ENCODE measurements at regions of chr2 and their contacts with region 1.

Region 1: DNA sequence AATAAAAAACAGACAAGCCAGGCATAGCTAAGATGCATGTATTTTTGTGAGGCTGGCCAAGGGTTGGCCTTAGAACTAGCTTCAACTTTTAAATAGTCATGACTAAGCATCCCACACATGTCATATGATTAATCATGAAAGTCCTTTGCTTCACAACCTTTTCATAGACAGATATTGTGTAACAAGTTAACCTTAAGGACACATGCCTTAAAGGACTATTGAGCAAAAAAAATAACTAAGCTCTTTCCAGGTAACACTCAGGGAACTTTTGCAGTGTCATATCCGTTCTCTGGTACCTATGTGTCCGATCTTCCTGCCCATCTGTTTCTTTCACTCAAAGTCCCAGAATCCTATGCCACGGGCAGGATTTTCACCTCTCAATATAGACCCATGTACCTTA is 498.4 kb downstream of the STK39 start:
- DNase-seq: peak; percentile 76 to 78
- ATAC-seq: peak; percentile 85 to 89
- H3K4me3 ChIP-seq: peak overlapping the region in 1 of 4 donors; percentile 47
- H3K27ac ChIP-seq: peak overlapping the region; percentile 86 to 89 (median 88)
- H3K4me1 ChIP-seq: peaks cover 6 to 30% of the 10 kb centered on the region in 2 donors
- H3K27me3 ChIP-seq: no peaks in the 10 kb centered on the region
- CTCF ChIP-seq: peak in 1 of 5 experiments; percentile 11
- POLR2A ChIP-seq: peak in 1 of 2 donors; percentile 15

Region 2: GRCh38 chr2:167187978-167188967 is 560.7 kb before region 1 on chr2:
- in situ Hi-C with region 1: no loop called
- intact Hi-C with region 1: loop called (anchors 5 kb)
- DNase-seq: no peak
- ATAC-seq: peak; percentile 51 to 57
- H3K4me3 ChIP-seq: peak overlapping the region; percentile 34 to 57 (median 43)
- H3K27ac ChIP-seq: peak overlapping the region; percentile 81 to 88 (median 86)
- H3K4me1 ChIP-seq: peaks cover 31 to 33% of the 10 kb centered on the region in 2 donors
- H3K27me3 ChIP-seq: no peaks in the 10 kb centered on the region
- CTCF ChIP-seq: no peak
- POLR2A ChIP-seq: peak in 1 of 2 donors; percentile 8

Region 3: GRCh38 chr2:167264380-167264779 is 484.6 kb before region 1 on chr2:
- in situ Hi-C with region 1: no loop called
- intact Hi-C with region 1: loop called (anchors 2 kb)
- DNase-seq: peak in 1 of 2 donors; percentile 25
- ATAC-seq: peak; percentile 58 to 76
- H3K4me3 ChIP-seq: no peak overlapping the region
- H3K27ac ChIP-seq: peak overlapping the region; percentile 29 to 62 (median 48)
- H3K4me1 ChIP-seq: peaks cover 0 to 10% of the 10 kb centered on the region in 2 donors
- H3K27me3 ChIP-seq: no peaks in the 10 kb centered on the region
- CTCF ChIP-seq: peak in 4 of 5 experiments; percentile 21 to 46 (median 40)
- POLR2A ChIP-seq: no peak

Region 4: DNA sequence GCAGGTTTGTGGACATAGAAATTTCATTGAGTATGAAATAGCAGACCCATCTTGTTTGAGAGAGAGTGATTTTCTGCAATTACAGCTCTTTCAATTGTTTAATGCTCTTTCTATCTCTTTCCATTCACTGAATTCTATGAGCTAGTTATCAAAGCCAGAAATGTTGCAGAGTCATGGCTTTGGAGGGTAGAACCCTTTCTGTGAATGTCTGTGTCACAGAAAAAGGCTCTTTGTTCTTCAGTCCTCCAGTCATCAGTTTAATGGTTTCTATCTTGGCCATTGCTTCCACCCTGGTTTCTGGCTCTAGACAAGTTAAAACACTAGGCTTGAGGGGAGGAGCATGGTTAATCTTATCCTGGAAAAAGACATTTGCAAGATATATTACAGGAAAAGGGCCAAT is 156.6 kb before region 1 on chr2:
- in situ Hi-C with region 1: no loop called
- intact Hi-C with region 1: no loop called
- DNase-seq: no peak
- ATAC-seq: no peak
- H3K4me3 ChIP-seq: no peak overlapping the region
- H3K27ac ChIP-seq: no peak overlapping the region
- H3K4me1 ChIP-seq: no peaks in the 10 kb centered on the region
- H3K27me3 ChIP-seq: no peaks in the 10 kb centered on the region
- CTCF ChIP-seq: no peak
- POLR2A ChIP-seq: no peak

Region 5: GRCh38 chr2:167689444-167689843 is 59.6 kb before region 1 on chr2:
- in situ Hi-C with region 1: no loop called
- intact Hi-C with region 1: loop called (anchors 2 kb)
- DNase-seq: peak; percentile 57 to 60
- ATAC-seq: peak; percentile 94 to 97
- H3K4me3 ChIP-seq: peak overlapping the region in 1 of 4 donors; percentile 17
- H3K27ac ChIP-seq: peak overlapping the region; percentile 24 to 75 (median 36)
- H3K4me1 ChIP-seq: no peaks in the 10 kb centered on the region
- H3K27me3 ChIP-seq: no peaks in the 10 kb centered on the region
- CTCF ChIP-seq: peak in 4 of 5 experiments; percentile 6 to 32 (median 24)
- POLR2A ChIP-seq: no peak

Region 6: DNA sequence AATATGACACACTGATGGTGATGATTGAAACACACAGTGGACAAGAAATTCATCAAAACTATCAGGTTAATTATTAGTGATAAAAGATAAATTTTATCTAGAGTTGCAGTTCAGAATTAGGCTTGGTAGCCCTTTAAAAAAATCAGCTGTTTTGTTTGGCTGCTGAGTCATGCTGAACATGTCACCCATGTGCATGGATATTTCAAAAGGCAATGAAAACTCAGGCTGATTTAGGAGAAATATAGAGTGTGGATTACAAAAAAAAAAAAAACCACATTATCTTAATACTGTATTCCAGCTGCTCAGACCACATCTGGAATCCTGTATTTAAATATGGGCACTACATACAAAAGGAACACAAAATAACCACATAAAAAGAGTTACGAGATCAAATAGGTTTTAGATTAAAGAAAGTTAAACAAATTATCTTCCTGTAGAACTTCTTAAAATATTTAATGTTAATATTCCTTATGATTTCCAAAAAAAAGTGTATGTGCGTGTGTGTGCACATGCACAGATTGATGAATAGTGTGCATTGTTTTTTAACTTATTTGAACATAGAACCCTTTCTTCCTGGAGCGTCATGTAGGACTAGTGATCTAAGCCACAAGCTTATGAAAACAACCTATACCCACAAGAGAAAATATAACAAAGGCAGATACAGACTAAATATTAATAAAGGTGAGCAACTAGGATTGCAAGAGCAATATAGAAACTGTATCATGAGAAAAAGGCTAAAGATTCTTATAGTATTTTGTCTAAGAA is 312.2 kb after region 1 on chr2:
- in situ Hi-C with region 1: no loop called
- intact Hi-C with region 1: no loop called
- DNase-seq: no peak
- ATAC-seq: no peak
- H3K4me3 ChIP-seq: no peak overlapping the region
- H3K27ac ChIP-seq: no peak overlapping the region
- H3K4me1 ChIP-seq: no peaks in the 10 kb centered on the region
- H3K27me3 ChIP-seq: no peaks in the 10 kb centered on the region
- CTCF ChIP-seq: no peak
- POLR2A ChIP-seq: no peak